ENCODE measurements at regions of chr9 and their contacts with region 1.

Region 1: GRCh38 chr9:116555119-116555518 is 132.0 kb upstream of the TRIM32 start:
- DNase-seq: peak in 4 of 5 donors; percentile 36 to 69 (median 52)
- ATAC-seq: peak in 3 of 4 donors; percentile 61 to 71 (median 70)
- H3K4me3 ChIP-seq: no peak overlapping the region
- H3K27ac ChIP-seq: peak overlapping the region in 8 of 12 donors; percentile 16 to 47 (median 28)
- H3K4me1 ChIP-seq: peaks cover 0 to 25% (median 9%) of the 10 kb centered on the region in 12 donors
- H3K27me3 ChIP-seq: no peaks in the 10 kb centered on the region
- CTCF ChIP-seq: no peak
- POLR2A ChIP-seq: no peak

Region 2: DNA sequence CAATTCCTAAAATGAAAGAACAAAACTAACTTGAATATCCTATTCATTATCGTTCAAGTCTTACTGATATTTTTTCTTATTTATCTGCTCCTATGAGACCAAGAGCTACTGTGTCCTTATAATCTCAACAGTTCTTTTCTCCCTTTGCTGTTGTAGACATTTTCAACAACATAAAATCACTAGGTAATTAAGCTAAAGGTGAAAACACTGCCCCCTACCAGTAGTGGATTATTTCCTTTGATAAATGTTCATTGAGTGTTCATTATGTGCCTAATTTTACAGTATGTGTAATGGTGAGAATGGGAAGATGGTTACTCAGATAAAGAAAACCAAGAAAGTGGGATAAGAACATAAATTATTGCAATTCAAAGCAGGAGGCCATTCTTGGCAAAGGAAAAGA is 442.9 kb before region 1 on chr9:
- intact Hi-C with region 1: loop called in 1 of 10 experiments (anchors 5 kb)
- DNase-seq: no peak
- ATAC-seq: no peak
- H3K4me3 ChIP-seq: no peak overlapping the region
- H3K27ac ChIP-seq: no peak overlapping the region
- H3K4me1 ChIP-seq: no peaks in the 10 kb centered on the region
- H3K27me3 ChIP-seq: no peaks in the 10 kb centered on the region
- CTCF ChIP-seq: peak in 8 of 12 donors; percentile 14 to 42 (median 32)
- POLR2A ChIP-seq: no peak

Measured in heart left ventricle (tissue), 16 donors.